Naive thymus-derived CD4-positive, alpha-beta T cell (primary cell): ENCODE measurements at regions of chr15 and their contacts with region 1.

Region 1: DNA sequence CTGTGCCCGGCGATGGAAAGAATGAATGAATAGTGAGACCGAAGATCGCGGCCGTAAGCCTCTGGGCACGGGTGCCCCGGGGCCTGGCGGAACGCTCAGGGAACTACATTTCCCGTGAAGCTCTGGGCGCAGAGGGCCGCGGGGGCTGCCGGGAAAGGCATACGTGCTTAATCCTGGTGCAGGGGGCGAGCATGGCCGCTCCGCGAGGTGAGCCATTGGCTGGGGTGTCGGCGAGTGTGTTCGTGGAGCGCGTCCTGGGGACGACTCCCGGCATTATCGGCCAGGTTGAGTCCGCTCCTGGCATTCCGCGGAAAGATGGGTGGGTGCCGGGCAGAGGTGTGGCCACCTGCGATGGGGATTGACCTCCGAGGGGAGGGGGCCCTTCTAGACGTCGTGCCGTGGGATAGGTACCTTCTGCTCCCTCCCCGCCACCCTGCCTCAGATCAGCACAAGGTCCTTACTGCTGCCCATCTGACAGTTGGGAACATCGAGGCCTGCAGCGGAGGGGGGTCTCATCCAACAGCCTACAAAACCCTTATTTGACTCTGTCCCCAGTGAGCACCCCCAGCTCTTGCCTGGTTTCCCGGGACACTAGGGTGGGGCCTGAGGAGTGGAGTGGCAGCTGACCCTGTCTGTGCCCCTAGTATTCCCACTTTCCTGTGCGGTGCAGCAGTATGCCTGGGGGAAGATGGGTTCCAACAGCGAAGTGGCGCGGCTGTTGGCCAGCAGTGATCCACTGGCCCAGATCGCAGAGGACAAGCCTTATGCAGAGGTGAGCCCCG is at the start of gene MPI:
- DNase-seq: peak; percentile 65 to 87 (median 79)
- ATAC-seq: peak; percentile 97
- H3K4me3 ChIP-seq: peak within 1 kb of the TSS; percentile 94
- H3K4me3 Mint-ChIP-seq: peak within 1 kb of the TSS; percentile 81 to 95 (median 90)
- H3K27ac ChIP-seq: peak within 1 kb of the TSS; percentile 84
- H3K27ac Mint-ChIP-seq: peak within 1 kb of the TSS; percentile 83 to 99 (median 94)
- H3K4me1 ChIP-seq: peaks cover 33 to 36% of the 10 kb centered on the region in 2 donors
- H3K4me1 Mint-ChIP-seq: peaks cover 30 to 59% (median 49%) of the 10 kb centered on the region in 7 donors
- H3K27me3 ChIP-seq: no peaks in the 10 kb centered on the region
- H3K27me3 Mint-ChIP-seq: no peaks in the 10 kb centered on the region
- total RNA-seq, gene MPI: 34.0 to 97.8 (median 80.6) TPM

Region 2: DNA sequence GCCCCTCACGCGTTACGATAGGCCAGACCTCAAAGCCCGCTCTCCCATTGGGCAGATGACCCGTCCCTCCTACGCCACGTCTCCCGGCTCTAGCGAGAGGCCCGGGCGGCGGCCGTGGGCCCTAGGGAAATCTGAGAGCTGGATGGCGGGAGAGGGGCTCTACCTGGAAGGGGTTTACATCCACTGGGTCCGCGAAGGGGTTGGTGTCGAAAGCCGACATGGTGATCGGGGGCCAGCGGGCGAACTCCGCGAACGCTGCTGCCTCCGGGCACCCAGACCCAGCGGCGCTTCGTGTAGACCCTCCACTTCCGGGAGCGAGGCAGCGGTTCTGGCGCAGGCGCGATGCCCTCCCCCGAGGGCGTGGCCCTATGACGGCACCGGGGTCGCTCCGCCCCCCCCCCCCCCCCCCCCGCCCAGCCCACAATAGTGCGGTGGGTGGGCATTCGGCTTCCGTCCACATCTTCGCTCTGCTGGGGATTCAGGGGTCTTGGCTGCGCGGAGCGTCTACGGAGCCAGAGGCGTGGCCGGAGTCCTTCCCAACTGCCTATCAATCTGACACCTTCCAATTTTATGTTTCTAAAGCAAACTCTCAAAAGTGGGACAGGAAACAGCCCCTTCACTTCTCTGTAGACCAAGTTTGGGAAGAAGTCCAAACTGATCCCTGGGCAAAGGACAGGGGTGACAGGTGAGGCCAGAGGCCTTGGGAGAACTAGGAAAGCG is 16.9 kb before region 1 on chr15 and contains the start of gene SCAMP2:
- CTCF ChIA-PET with region 1: interaction called, 6 read pairs
- POLR2A ChIA-PET with region 1: interaction called, 18 read pairs
- intact Hi-C with region 1: loop called (anchors 1 kb)
- DNase-seq: peak; percentile 83 to 94 (median 91)
- ATAC-seq: peak; percentile 95
- H3K4me3 ChIP-seq: peak within 1 kb of the TSS; percentile 86
- H3K4me3 Mint-ChIP-seq: peak within 1 kb of the TSS; percentile 92 to 100 (median 98)
- H3K27ac ChIP-seq: peak within 1 kb of the TSS; percentile 98
- H3K27ac Mint-ChIP-seq: peak within 1 kb of the TSS; percentile 88 to 99 (median 96)
- H3K4me1 ChIP-seq: peaks cover 38 to 39% of the 10 kb centered on the region in 2 donors
- H3K4me1 Mint-ChIP-seq: peaks cover 31 to 54% (median 45%) of the 10 kb centered on the region in 7 donors
- H3K27me3 ChIP-seq: no peaks in the 10 kb centered on the region
- H3K27me3 Mint-ChIP-seq: peaks cover 0 to 8% (median 0%) of the 10 kb centered on the region in 5 donors
- total RNA-seq, gene SCAMP2: 78.9 to 130 (median 116) TPM